AG04449 (cell line): ENCODE measurements at regions of chr11 and their contacts with region 1.

Region 1: GRCh38 chr11:74929431-74930363 is 19.2 kb downstream of the XRRA1 start:
- DNase-seq: peak; percentile 74
- H3K4me3 ChIP-seq: no peak overlapping the region
- CTCF ChIP-seq: peak; percentile 76

Region 2: GRCh38 chr11:74780248-74781005 is 149.3 kb before region 1 on chr11:
- CTCF ChIA-PET with region 1: no interaction called
- POLR2A ChIA-PET with region 1: no interaction called
- DNase-seq: no peak
- H3K4me3 ChIP-seq: no peak overlapping the region
- CTCF ChIP-seq: no peak

Region 3: DNA sequence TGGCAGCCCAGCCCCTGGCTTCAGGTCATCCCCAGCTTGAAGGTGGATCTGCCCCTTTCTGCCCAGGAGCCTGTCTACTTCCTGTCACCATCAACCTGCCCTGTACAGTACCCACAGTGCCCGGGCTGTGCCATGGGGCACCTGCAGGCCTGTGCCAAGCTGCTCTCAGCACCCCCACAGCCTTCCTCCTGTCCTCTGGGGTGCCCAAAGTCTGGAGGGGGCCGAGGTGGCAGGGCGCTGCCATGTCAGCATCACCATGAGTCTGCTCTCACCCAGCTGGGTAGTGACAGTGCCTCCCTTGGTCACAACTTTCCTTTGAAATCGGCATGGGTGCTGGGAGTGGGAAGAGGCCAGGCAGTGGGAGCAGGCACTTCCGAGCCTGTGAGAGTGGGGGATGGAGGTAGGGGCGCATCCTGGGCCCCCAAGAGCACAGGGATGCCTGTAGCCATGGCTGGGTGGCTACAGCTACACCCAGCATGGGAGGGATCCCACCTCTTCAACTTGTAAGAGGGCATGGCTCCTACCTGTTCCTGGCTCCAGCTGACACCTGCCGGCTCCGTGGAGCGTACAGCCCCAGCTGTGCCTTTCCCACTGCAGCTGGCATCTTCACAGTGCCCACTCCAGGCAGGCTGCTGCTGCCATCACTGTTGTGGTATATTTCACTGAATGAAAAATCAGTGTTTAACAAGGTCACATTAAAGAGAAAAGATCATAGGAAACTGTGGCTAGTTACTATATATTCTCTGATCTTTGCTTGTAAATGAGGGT is 138.2 kb before region 1 on chr11:
- CTCF ChIA-PET with region 1: no interaction called
- POLR2A ChIA-PET with region 1: no interaction called
- DNase-seq: no peak
- H3K4me3 ChIP-seq: no peak overlapping the region
- CTCF ChIP-seq: no peak

Region 4: DNA sequence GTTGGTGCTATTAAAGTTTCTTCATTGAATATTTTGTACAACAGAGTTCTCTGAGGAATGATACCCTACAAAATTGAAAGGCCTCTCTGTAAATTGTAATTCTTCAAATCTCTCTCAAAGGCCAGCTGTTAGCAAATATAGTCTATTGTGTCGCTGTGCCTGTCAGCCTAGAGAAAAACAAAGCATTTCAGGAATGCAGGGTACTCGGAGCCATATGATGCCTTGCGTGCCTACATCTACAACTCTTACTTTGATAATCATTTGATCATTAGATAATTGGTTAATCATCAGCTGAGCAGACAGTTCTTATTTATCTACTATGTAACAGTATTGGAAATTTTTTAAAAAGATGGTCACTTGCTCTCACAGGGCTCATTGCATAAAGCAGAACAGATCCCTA is 113.7 kb before region 1 on chr11:
- CTCF ChIA-PET with region 1: no interaction called
- POLR2A ChIA-PET with region 1: no interaction called
- DNase-seq: no peak
- H3K4me3 ChIP-seq: no peak overlapping the region
- CTCF ChIP-seq: no peak

Region 5: GRCh38 chr11:74909385-74909784 is 20.3 kb before region 1 on chr11:
- CTCF ChIA-PET with region 1: interaction called, 13 read pairs
- POLR2A ChIA-PET with region 1: no interaction called
- DNase-seq: no peak
- H3K4me3 ChIP-seq: no peak overlapping the region
- CTCF ChIP-seq: no peak

Region 6: GRCh38 chr11:75022759-75023396 is 93.2 kb after region 1 on chr11:
- CTCF ChIA-PET with region 1: interaction called, 127 read pairs
- POLR2A ChIA-PET with region 1: no interaction called
- DNase-seq: peak; percentile 28
- H3K4me3 ChIP-seq: no peak overlapping the region
- CTCF ChIP-seq: peak; percentile 96

Region 7: GRCh38 chr11:75103380-75104026 is 173.8 kb after region 1 on chr11:
- CTCF ChIA-PET with region 1: no interaction called
- POLR2A ChIA-PET with region 1: no interaction called
- DNase-seq: peak; percentile 29
- H3K4me3 ChIP-seq: no peak overlapping the region
- CTCF ChIP-seq: no peak

Region 8: GRCh38 chr11:75195121-75195551 is 265.4 kb after region 1 on chr11:
- CTCF ChIA-PET with region 1: interaction called, 10 read pairs
- POLR2A ChIA-PET with region 1: no interaction called
- DNase-seq: no peak
- H3K4me3 ChIP-seq: no peak overlapping the region
- CTCF ChIP-seq: no peak

Region 9: DNA sequence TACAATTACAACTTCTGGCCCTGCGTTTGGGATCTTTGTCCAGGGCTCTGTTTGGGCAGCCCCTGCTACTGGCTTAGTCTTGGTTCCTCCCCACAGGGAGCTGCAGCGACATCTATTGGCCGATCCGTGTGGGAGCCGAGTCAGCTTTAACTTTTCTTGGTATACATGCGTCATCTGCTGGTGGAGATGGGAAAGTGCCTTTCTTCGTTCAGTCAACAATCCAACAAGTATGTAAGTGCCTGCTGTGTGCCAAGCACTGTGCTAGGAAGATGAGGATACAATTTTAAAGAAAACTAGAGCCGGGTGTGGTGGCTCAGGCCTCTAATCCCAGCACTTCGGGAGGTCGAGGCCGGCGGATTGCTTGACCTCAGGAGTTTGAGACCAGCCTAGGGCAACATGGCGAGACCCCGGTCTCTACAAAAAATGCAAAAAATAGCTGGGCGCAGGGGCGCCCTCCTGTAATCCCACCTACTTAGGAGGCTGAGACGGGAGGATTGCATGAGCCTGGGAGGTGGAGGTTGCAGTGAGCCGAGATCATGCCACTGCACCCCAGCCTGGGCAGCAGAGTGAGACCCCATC is 319.1 kb after region 1 on chr11:
- CTCF ChIA-PET with region 1: interaction called, 149 read pairs
- POLR2A ChIA-PET with region 1: no interaction called
- DNase-seq: peak; percentile 37
- H3K4me3 ChIP-seq: no peak overlapping the region
- CTCF ChIP-seq: peak; percentile 96